Right ventricle myocardium superior (tissue), 1 donor: ENCODE measurements at regions of chr6 and their contacts with region 1.

Region 1: GRCh38 chr6:82178077-82178758 is 69.3 kb downstream of the IBTK start:
- DNase-seq: no peak
- ATAC-seq: peak; percentile 86

Region 2: DNA sequence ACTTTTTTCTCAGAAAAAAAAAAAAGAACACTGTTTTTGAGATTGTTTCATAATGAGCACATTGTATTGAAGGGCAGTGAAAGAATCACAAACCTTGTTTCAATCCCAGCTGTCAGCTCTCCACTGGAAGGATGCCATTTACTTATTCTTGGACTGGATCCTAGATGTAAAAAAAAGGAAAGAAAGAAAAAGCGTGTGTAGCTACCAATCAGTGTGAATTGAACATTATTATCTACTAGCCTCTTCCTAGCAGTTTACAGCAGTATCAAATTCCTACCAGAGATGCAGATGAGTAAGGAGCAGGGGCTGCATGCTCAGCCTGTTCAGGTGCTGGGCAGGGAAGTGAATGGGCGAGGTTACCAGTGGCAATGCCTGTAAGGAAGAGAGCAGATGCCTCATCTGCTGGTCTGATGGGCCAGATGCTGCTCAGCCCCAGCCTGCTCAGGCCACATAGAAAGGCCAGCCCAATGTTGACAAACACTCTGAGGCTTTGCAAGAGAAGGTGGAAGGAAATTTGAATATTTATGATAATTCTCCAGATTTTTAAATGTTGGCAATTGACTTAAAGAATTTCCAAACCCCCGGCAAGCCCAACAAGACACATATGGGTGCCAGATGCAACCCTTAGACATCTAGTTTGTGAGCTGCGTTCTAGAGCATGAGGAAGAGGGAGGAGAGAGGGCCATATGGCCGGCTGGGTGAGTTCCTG is 120.2 kb before region 1 on chr6:
- intact Hi-C with region 1: loop called (anchors 10 kb)
- DNase-seq: no peak
- ATAC-seq: peak; percentile 80